ENCODE measurements at regions of chr13 and their contacts with region 1.

Region 1: DNA sequence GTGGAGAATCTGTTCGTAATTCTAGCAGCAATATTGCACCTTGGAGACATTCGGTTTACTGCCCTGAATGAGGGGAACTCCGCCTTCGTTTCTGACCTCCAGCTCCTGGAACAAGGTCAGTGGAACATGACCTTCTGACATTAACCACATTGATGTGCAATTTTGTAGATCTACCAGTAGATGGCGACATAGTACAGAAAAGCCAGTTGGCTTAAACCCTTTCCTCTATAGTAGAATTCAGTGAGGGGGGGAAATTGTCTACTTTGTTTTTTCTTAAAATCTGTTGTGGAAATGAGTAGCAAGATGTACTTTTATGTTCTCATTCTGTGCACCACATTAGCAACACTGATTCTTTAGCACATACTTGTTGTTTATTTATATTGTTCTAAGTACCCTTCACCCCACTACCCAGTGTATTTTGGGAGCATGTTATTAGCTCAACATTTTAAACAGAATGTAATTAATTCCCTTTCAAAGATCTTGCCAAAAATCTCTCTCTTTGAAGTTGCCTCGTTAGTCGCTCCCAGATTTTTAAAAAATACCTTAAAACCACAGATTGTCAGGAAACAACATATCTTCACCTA is 332.2 kb downstream of the MYO16 start:
- DNase-seq: peak in 6 of 9 donors; percentile 11 to 62 (median 51)
- ATAC-seq: peak; percentile 86
- H3K4me3 ChIP-seq: no peak overlapping the region
- H3K4me3 Mint-ChIP-seq: no peak overlapping the region
- H3K27ac ChIP-seq: no peak overlapping the region
- H3K27ac Mint-ChIP-seq: no peak overlapping the region
- H3K4me1 ChIP-seq: no peaks in the 10 kb centered on the region
- H3K4me1 Mint-ChIP-seq: peaks cover 0 to 2% (median 0%) of the 10 kb centered on the region in 7 donors
- H3K27me3 ChIP-seq: no peaks in the 10 kb centered on the region
- H3K27me3 Mint-ChIP-seq: peaks cover 2 to 4% (median 3%) of the 10 kb centered on the region in 5 donors

Region 2: DNA sequence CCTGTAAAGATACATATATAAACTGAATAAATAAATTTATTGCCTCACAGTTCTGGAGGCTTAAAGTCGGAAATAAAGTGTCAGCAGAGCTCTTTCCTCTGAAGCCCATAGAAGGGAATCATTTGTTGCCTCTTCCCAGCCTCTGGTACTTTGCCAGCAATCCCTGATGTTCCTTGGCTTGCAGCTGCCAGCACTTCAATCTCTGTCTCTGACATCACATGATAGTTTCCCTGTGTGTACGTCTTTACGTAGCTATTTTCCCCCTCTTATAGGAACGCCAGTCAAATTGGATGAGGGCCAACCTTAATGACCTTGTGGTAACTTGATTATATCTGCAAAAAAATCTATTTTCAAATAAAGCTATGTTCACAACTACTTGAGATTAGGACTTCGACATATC is 997.2 kb before region 1 on chr13:
- CTCF ChIA-PET with region 1: no interaction called
- POLR2A ChIA-PET with region 1: no interaction called
- intact Hi-C with region 1: no loop called
- DNase-seq: no peak
- ATAC-seq: no peak
- H3K4me3 ChIP-seq: no peak overlapping the region
- H3K4me3 Mint-ChIP-seq: no peak overlapping the region
- H3K27ac ChIP-seq: no peak overlapping the region
- H3K27ac Mint-ChIP-seq: no peak overlapping the region
- H3K4me1 ChIP-seq: no peaks in the 10 kb centered on the region
- H3K4me1 Mint-ChIP-seq: no peaks in the 10 kb centered on the region
- H3K27me3 ChIP-seq: no peaks in the 10 kb centered on the region
- H3K27me3 Mint-ChIP-seq: peaks cover 0 to 11% (median 0%) of the 10 kb centered on the region in 5 donors

Region 3: GRCh38 chr13:109145631-109146030 is 184.0 kb after region 1 on chr13:
- CTCF ChIA-PET with region 1: no interaction called
- POLR2A ChIA-PET with region 1: no interaction called
- intact Hi-C with region 1: loop called (anchors 1 to 10 kb)
- DNase-seq: peak in 4 of 9 donors; percentile 10 to 17 (median 14)
- ATAC-seq: peak; percentile 61
- H3K4me3 ChIP-seq: no peak overlapping the region
- H3K4me3 Mint-ChIP-seq: no peak overlapping the region
- H3K27ac ChIP-seq: no peak overlapping the region
- H3K27ac Mint-ChIP-seq: no peak overlapping the region
- H3K4me1 ChIP-seq: no peaks in the 10 kb centered on the region
- H3K4me1 Mint-ChIP-seq: peaks cover 0 to 2% (median 0%) of the 10 kb centered on the region in 7 donors
- H3K27me3 ChIP-seq: peaks cover 0 to 6% of the 10 kb centered on the region in 2 donors
- H3K27me3 Mint-ChIP-seq: peaks cover 20 to 51% (median 47%) of the 10 kb centered on the region in 5 donors

Region 4: DNA sequence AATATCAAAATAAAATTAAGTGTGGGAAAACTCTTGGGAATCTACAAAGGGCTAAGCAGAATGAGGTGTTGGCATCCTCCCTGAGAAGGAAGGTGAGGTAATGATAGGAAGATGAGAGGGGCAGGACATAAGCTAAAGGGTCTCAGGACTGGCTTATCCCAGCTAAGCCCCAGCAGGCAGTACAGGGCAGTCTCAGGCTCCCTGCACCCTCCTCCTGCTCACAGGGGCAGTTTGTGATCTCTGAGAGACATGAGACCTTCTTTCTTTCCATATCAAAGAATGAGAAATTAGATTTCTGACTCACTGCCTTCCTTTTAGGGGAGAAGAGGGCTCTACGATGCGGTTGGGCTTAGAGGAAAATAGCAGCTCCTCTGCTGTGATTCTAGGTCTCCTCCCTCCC is 253.7 kb after region 1 on chr13:
- CTCF ChIA-PET with region 1: no interaction called
- POLR2A ChIA-PET with region 1: no interaction called
- intact Hi-C with region 1: loop called in 1 of 2 experiments (anchors 5 kb)
- DNase-seq: no peak
- ATAC-seq: no peak
- H3K4me3 ChIP-seq: no peak overlapping the region
- H3K4me3 Mint-ChIP-seq: no peak overlapping the region
- H3K27ac ChIP-seq: no peak overlapping the region
- H3K27ac Mint-ChIP-seq: no peak overlapping the region
- H3K4me1 ChIP-seq: no peaks in the 10 kb centered on the region
- H3K4me1 Mint-ChIP-seq: no peaks in the 10 kb centered on the region
- H3K27me3 ChIP-seq: no peaks in the 10 kb centered on the region
- H3K27me3 Mint-ChIP-seq: peaks cover 0 to 4% (median 0%) of the 10 kb centered on the region in 5 donors

Region 5: DNA sequence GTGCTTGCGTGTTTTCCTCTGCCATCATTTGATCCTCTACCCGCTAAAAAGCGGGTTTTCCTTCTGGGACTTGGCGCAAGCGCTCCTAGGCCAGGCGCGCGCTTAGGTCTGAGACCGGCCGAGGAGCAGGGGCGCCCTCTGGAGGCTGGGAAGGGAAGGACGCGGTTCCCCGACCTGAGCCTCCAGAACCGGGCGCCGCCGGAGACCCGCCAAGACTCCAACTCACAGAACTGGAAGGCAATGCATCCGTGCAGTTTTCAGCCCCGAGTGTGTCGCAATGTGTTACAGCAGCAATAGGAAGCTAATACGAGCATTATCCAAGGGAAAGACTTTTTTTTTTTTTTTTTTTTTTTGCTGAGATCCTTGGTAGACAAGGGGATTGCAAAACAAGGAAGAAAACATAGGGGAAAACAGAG is 1154.4 kb after region 1 on chr13:
- CTCF ChIA-PET with region 1: interaction called, 3 read pairs
- POLR2A ChIA-PET with region 1: no interaction called
- intact Hi-C with region 1: loop called in 1 of 2 experiments (anchors 1 kb)
- DNase-seq: peak in 8 of 9 donors; percentile 6 to 67 (median 24)
- ATAC-seq: peak; percentile 63
- H3K4me3 ChIP-seq: no peak overlapping the region
- H3K4me3 Mint-ChIP-seq: peak overlapping the region in 1 of 10 donors; percentile 48
- H3K27ac ChIP-seq: no peak overlapping the region
- H3K27ac Mint-ChIP-seq: peak overlapping the region in 1 of 9 donors; percentile 5
- H3K4me1 ChIP-seq: no peaks in the 10 kb centered on the region
- H3K4me1 Mint-ChIP-seq: peaks cover 0 to 3% (median 0%) of the 10 kb centered on the region in 7 donors
- H3K27me3 ChIP-seq: no peaks in the 10 kb centered on the region
- H3K27me3 Mint-ChIP-seq: peaks cover 12 to 59% (median 36%) of the 10 kb centered on the region in 5 donors

Region 6: GRCh38 chr13:110225609-110226562 is 1264.3 kb after region 1 on chr13:
- CTCF ChIA-PET with region 1: no interaction called
- POLR2A ChIA-PET with region 1: no interaction called
- intact Hi-C with region 1: loop called in 1 of 2 experiments (anchors 1 kb)
- DNase-seq: no peak
- ATAC-seq: no peak
- H3K4me3 ChIP-seq: no peak overlapping the region
- H3K4me3 Mint-ChIP-seq: no peak overlapping the region
- H3K27ac ChIP-seq: no peak overlapping the region
- H3K27ac Mint-ChIP-seq: no peak overlapping the region
- H3K4me1 ChIP-seq: no peaks in the 10 kb centered on the region
- H3K4me1 Mint-ChIP-seq: no peaks in the 10 kb centered on the region
- H3K27me3 ChIP-seq: no peaks in the 10 kb centered on the region
- H3K27me3 Mint-ChIP-seq: peaks cover 4 to 23% (median 14%) of the 10 kb centered on the region in 5 donors

Region 7: GRCh38 chr13:110239280-110240125 is 1277.9 kb after region 1 on chr13:
- CTCF ChIA-PET with region 1: no interaction called
- POLR2A ChIA-PET with region 1: no interaction called
- intact Hi-C with region 1: loop called in 1 of 2 experiments (anchors 5 kb)
- DNase-seq: no peak
- ATAC-seq: no peak
- H3K4me3 ChIP-seq: no peak overlapping the region
- H3K4me3 Mint-ChIP-seq: no peak overlapping the region
- H3K27ac ChIP-seq: no peak overlapping the region
- H3K27ac Mint-ChIP-seq: no peak overlapping the region
- H3K4me1 ChIP-seq: no peaks in the 10 kb centered on the region
- H3K4me1 Mint-ChIP-seq: no peaks in the 10 kb centered on the region
- H3K27me3 ChIP-seq: peaks cover 0 to 3% of the 10 kb centered on the region in 2 donors
- H3K27me3 Mint-ChIP-seq: peaks cover 13 to 39% (median 17%) of the 10 kb centered on the region in 5 donors

Region 8: DNA sequence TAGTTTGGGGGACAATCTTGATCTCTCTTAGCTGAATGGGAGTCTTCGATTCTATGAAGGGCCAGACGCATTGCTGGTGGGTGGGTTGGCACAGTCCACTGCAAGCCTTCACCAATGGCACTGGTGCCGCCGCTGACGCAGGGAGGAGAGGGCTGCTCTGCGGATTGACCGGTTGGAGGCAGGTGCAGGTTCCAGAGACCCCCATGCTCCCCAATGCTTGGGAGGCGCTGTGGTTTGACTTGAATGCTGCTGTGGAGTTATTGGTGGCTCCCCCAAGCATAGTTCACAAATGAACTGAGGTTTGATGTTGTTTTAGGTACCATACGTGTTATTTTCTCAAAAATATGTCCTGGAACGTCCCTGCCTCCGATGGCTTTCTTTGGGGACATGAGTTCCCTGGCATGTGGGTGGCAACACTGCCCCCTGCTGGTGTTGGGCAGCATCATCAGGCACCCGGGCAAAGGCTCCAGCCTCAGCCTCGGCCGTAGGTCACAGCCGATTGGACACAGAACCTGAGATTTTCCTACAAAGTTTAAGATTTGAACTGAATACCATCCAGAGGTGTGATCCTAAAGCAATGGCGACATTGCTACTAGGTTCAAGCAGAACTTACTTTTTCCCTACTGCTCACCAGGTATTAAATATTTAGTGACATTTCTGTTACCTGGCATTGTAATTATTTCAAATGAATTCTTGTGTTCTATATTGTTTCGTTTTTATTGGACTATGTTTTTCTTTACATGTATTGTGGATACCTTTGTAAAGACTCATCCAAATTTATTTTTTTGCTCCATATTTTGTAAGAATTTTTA is 1857.8 kb after region 1 on chr13:
- CTCF ChIA-PET with region 1: no interaction called
- POLR2A ChIA-PET with region 1: no interaction called
- intact Hi-C with region 1: loop called in 1 of 2 experiments (anchors 5 kb)
- DNase-seq: peak; percentile 39 to 78 (median 66)
- ATAC-seq: peak; percentile 95
- H3K4me3 ChIP-seq: no peak overlapping the region
- H3K4me3 Mint-ChIP-seq: peak overlapping the region in 3 of 10 donors; percentile 16 to 21 (median 19)
- H3K27ac ChIP-seq: no peak overlapping the region
- H3K27ac Mint-ChIP-seq: peak overlapping the region in 1 of 9 donors; percentile 72
- H3K4me1 ChIP-seq: no peaks in the 10 kb centered on the region
- H3K4me1 Mint-ChIP-seq: peaks cover 0 to 17% (median 14%) of the 10 kb centered on the region in 7 donors
- H3K27me3 ChIP-seq: no peaks in the 10 kb centered on the region
- H3K27me3 Mint-ChIP-seq: peaks cover 0 to 13% (median 0%) of the 10 kb centered on the region in 5 donors